ENCODE measurements at regions of chr2 and their contacts with region 1.

Region 1: GRCh38 chr2:241702132-241703031 is 543 bp downstream of the ING5 start:
- DNase-seq: peak; percentile 37
- ATAC-seq: peak; percentile 87
- H3K4me3 ChIP-seq: peak overlapping the region; percentile 95
- H3K27ac ChIP-seq: peak overlapping the region; percentile 89
- H3K4me1 ChIP-seq: 0 out of 2 replicates have a peak, but pooled peaks cover 6% of the 10 kb centered on the region
- H3K27me3 ChIP-seq: no peaks in the 10 kb centered on the region
- CTCF ChIP-seq: peak; percentile 42 to 60 (median 49)
- EP300 ChIP-seq: no peak
- POLR2A ChIP-seq: peak; percentile 75
- RAD21 ChIP-seq: no peak

Region 2: GRCh38 chr2:241734467-241735208 is 32.3 kb after region 1 on chr2 and contains the start of gene D2HGDH:
- CTCF ChIA-PET with region 1: interaction called, 10 read pairs
- POLR2A ChIA-PET with region 1: interaction called, 19 read pairs
- RAD21 ChIA-PET with region 1: interaction called, 14 read pairs
- SMC1A ChIA-PET with region 1: interaction called, 9 read pairs
- in situ Hi-C with region 1: no loop called
- intact Hi-C with region 1: loop called (anchors 2 kb)
- DNase-seq: no peak
- ATAC-seq: peak; percentile 90
- H3K4me3 ChIP-seq: peak within 1 kb of the TSS; percentile 84
- H3K27ac ChIP-seq: peak within 1 kb of the TSS; percentile 86
- H3K4me1 ChIP-seq: 0 out of 2 replicates have a peak, but pooled peaks cover 3% of the 10 kb centered on the region
- H3K27me3 ChIP-seq: no peaks in the 10 kb centered on the region
- CTCF ChIP-seq: no peak
- EP300 ChIP-seq: no peak
- POLR2A ChIP-seq: peak; percentile 83
- RAD21 ChIP-seq: no peak
- polyA plus RNA-seq, gene D2HGDH: 0.52 to 1.1 TPM